ENCODE measurements at regions of chr14 and their contacts with region 1.

Region 1: DNA sequence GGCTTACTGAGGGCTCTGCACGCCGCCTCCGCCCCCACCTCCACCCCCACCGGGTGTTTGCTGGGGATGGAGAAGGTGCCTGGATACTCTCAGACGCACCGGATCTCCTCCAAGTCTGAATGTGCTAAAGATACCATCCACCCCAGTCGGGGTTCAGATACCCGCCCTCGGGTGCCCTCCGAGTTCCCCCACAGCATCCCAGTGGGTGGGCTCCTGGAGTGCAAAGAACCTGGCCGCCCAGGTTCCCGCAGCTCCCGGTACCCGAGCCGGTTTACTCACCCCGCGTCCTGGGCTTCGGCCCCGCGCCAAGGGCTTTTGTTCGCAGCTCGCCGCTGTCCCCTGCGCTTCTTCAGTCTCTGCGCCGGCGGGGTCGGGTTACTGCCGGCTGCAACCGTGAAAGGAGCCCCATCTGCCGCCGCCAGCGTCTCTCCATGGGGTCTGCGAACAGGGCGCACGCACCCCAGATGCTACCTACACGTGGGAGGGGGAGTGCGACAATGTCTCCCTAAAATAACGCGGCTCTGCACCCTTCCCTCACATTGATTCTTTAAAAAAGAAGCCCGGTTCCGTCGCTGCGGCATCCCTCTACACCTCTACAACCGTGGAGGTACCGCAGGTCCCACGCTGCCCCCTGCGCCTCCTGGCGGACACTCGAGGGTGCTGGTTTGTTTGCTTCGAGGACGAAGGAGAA is at the start of gene CCDC177:
- DNase-seq: peak; percentile 88
- H3K4me3 ChIP-seq: peak within 1 kb of the TSS; percentile 43 to 58
- H3K27ac ChIP-seq: no peak within 1 kb of the TSS
- H3K4me1 ChIP-seq: peaks cover 0 to 2% of the 10 kb centered on the region in 2 experiments; a peak in 1 of 4 replicates
- H3K27me3 ChIP-seq: peaks cover 16% of the 10 kb centered on the region; the same call in 1 of the 2 replicates
- CTCF ChIP-seq: peak; percentile 94
- EP300 ChIP-seq: no peak
- RAD21 ChIP-seq: peak; percentile 78
- polyA plus RNA-seq, gene CCDC177: not detected in 2 replicates

Region 2: DNA sequence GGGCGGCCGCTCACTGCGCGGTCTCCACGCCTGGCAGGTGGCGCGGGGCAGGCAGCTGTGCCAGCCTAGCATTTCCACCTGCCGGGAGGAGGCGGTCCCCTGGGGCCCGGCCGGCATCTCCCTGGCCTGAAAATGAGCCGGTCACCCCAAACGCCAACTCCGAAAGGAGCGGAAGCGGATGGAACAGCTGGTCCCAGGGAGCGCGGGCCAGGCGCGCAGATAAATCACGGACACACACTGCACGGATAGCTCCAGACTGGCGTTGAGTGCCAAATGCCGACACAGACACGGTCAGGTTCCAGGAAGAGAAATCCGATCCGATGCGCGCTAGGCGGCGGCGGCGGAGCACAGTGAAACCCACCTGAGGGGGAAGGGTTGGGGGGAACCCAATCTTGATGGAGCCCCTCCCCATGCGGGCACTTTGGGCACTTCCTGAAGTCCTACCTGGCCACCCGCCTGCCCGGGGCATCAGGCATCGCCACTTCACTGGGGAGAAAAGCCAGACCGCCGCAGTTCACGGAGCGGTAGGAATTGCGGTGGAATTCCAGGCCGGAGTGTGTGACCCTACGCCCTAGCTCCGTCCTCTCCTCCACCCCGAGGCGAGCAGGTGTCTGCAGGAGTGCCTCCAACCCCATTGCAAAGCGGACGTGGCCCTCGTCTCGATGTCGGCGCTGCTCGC is 90.5 kb before region 1 on chr14:
- CTCF ChIA-PET with region 1: interaction called, 14 read pairs
- POLR2A ChIA-PET with region 1: no interaction called
- DNase-seq: peak; percentile 82
- H3K4me3 ChIP-seq: peak overlapping the region; percentile 48 to 54
- H3K27ac ChIP-seq: no peak overlapping the region
- H3K4me1 ChIP-seq: peaks cover 0 to 26% of the 10 kb centered on the region in 2 experiments; a peak in 2 of 4 replicates
- H3K27me3 ChIP-seq: peaks cover 37% of the 10 kb centered on the region
- CTCF ChIP-seq: no peak
- EP300 ChIP-seq: no peak
- RAD21 ChIP-seq: no peak

Region 3: GRCh38 chr14:69553221-69553620 is 21.2 kb before region 1 on chr14:
- CTCF ChIA-PET with region 1: interaction called, 368 read pairs
- POLR2A ChIA-PET with region 1: interaction called, 3 read pairs
- DNase-seq: no peak
- H3K4me3 ChIP-seq: no peak overlapping the region
- H3K27ac ChIP-seq: no peak overlapping the region
- H3K4me1 ChIP-seq: peaks cover 0 to 3% of the 10 kb centered on the region in 2 experiments; a peak in 1 of 4 replicates
- H3K27me3 ChIP-seq: no peaks in the 10 kb centered on the region; the same call in 1 of the 2 replicates
- CTCF ChIP-seq: no peak
- EP300 ChIP-seq: no peak
- RAD21 ChIP-seq: no peak

Region 4: DNA sequence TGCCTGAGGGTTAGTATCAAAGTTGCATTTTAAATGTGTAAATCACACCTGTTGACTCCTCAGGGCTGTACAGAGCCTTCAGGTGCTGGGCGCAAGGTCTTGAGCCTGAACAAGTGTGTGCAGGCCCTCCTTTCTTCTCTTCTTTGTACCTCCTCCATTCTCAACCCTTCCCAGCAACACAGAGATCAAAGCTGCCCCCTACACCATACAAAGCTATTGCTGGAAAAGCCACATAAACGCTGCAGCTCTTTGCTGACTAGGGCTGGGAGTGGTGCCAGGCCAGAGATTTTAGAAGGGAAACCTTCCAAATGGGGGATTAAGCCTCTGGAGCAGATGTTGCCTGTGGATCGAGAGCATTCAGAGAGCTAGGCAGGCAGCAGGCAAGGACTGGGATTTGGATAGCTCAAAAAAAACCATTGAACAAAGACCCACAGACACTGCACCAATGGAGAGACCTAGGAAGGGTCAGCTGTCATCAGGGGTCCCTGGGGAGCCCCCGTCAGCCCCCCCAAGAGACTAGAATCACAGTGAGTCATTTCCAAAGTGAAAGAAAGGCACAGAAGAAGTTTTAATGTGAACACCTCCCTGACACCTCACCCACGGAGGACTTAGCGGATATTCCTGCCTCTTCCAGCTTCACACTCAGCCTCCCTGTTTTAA is 18.7 kb after region 1 on chr14:
- CTCF ChIA-PET with region 1: interaction called, 16 read pairs
- POLR2A ChIA-PET with region 1: no interaction called
- DNase-seq: no peak
- H3K4me3 ChIP-seq: no peak overlapping the region
- H3K27ac ChIP-seq: no peak overlapping the region
- H3K4me1 ChIP-seq: peaks cover 0 to 3% of the 10 kb centered on the region in 2 experiments; a peak in 2 of 4 replicates
- H3K27me3 ChIP-seq: no peaks in the 10 kb centered on the region
- CTCF ChIP-seq: no peak
- EP300 ChIP-seq: no peak
- RAD21 ChIP-seq: no peak

Measured in SK-N-SH (cell line).